CD8-positive, alpha-beta T cell (primary cell): ENCODE measurements at regions of chr15 and their contacts with region 1.

Region 1: GRCh38 chr15:26477044-26477443 is 295.8 kb downstream of the GABRB3 start:
- DNase-seq: no peak
- ATAC-seq: no peak
- H3K4me3 ChIP-seq: no peak overlapping the region
- H3K4me3 Mint-ChIP-seq: no peak overlapping the region
- H3K27ac ChIP-seq: no peak overlapping the region
- H3K27ac Mint-ChIP-seq: no peak overlapping the region
- H3K4me1 ChIP-seq: no peaks in the 10 kb centered on the region
- H3K4me1 Mint-ChIP-seq: no peaks in the 10 kb centered on the region
- H3K27me3 ChIP-seq: no peaks in the 10 kb centered on the region
- H3K27me3 Mint-ChIP-seq: no peaks in the 10 kb centered on the region
- CTCF ChIP-seq: no peak

Region 2: GRCh38 chr15:26461847-26462608 is 15.0 kb before region 1 on chr15:
- CTCF ChIA-PET with region 1: no interaction called
- POLR2A ChIA-PET with region 1: no interaction called
- intact Hi-C with region 1: loop called in 1 of 2 experiments (anchors 2 kb)
- DNase-seq: no peak
- ATAC-seq: no peak
- H3K4me3 ChIP-seq: no peak overlapping the region
- H3K4me3 Mint-ChIP-seq: no peak overlapping the region
- H3K27ac ChIP-seq: no peak overlapping the region
- H3K27ac Mint-ChIP-seq: no peak overlapping the region
- H3K4me1 ChIP-seq: no peaks in the 10 kb centered on the region
- H3K4me1 Mint-ChIP-seq: no peaks in the 10 kb centered on the region
- H3K27me3 ChIP-seq: no peaks in the 10 kb centered on the region
- H3K27me3 Mint-ChIP-seq: no peaks in the 10 kb centered on the region
- CTCF ChIP-seq: no peak